ENCODE measurements at regions of chr17 and their contacts with region 1.

Region 1: GRCh38 chr17:48391444-48391843 is 38.6 kb downstream of the SKAP1 start:
- DNase-seq: no peak
- H3K4me3 Mint-ChIP-seq: no peak overlapping the region
- H3K27ac Mint-ChIP-seq: peak overlapping the region; percentile 42
- H3K4me1 Mint-ChIP-seq: peaks cover 23% of the 10 kb centered on the region
- H3K27me3 Mint-ChIP-seq: no peaks in the 10 kb centered on the region

Region 2: GRCh38 chr17:48246612-48247011 is 144.8 kb before region 1 on chr17:
- intact Hi-C with region 1: no loop called
- DNase-seq: no peak
- H3K4me3 Mint-ChIP-seq: no peak overlapping the region
- H3K27ac Mint-ChIP-seq: no peak overlapping the region
- H3K4me1 Mint-ChIP-seq: peaks cover 41% of the 10 kb centered on the region
- H3K27me3 Mint-ChIP-seq: no peaks in the 10 kb centered on the region

Region 3: DNA sequence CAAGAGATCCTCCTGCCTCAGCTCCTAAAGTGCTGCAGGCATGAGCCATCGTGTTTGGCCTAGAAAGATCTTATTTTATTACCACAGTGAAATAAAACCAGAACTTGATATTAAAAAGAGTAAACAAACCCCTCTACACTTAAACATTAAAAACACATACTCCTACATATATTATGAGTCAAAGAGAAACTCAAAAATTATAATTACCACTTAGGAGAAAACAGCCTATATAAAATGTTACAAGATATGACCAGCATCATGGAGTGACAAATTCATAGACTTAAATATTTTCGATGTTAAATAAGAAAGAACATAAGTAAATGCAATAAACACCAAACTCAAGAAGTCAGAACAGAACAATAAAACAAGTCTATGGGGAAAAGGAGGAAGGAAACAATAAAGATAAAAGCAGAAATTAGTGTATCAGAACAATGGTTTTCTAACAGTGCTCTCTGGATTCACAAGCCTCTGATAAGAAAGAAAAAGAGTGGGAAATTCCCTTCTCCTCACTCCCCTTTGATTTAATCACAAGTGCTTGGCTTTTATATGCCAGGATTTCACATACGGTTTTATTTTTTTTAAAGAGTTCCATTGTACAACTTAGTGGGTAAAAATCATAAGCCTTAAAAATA is 15.6 kb after region 1 on chr17:
- intact Hi-C with region 1: loop called (anchors 2 kb)
- DNase-seq: no peak
- H3K4me3 Mint-ChIP-seq: peak overlapping the region; percentile 13
- H3K27ac Mint-ChIP-seq: peak overlapping the region; percentile 84
- H3K4me1 Mint-ChIP-seq: peaks cover 43% of the 10 kb centered on the region
- H3K27me3 Mint-ChIP-seq: no peaks in the 10 kb centered on the region

Measured in activated T-helper 2 cell treated with anti-CD3 and anti-CD28 coated beads, Interferon-gamma antibody, Interleukin-2, Interleukin-4, amounts not matched to agents 10 μg/mL and 5 μg/mL and 100 μg/mL, durations not matched to agents 14 hours and 24 hours and 36 hours (primary cell).